ENCODE measurements at regions of chr1 and their contacts with region 1.

Region 1: GRCh38 chr1:24391882-24392603 is 21.5 kb downstream of the STPG1 start:
- DNase-seq: peak in 1 of 2 donors; percentile 71
- H3K4me3 ChIP-seq: no peak overlapping the region
- H3K27ac ChIP-seq: peak overlapping the region; percentile 51 to 75
- H3K4me1 ChIP-seq: peaks cover 0 to 2% of the 10 kb centered on the region in 2 donors
- H3K27me3 ChIP-seq: no peaks in the 10 kb centered on the region
- CTCF ChIP-seq: peak; percentile 44 to 57 (median 48)

Region 2: GRCh38 chr1:24070821-24071393 is 321.1 kb before region 1 on chr1:
- intact Hi-C with region 1: loop called (anchors 5 kb)
- DNase-seq: peak in 1 of 2 donors; percentile 87
- H3K4me3 ChIP-seq: no peak overlapping the region
- H3K27ac ChIP-seq: no peak overlapping the region
- H3K4me1 ChIP-seq: no peaks in the 10 kb centered on the region
- H3K27me3 ChIP-seq: no peaks in the 10 kb centered on the region
- CTCF ChIP-seq: peak; percentile 80 to 95 (median 85)

Region 3: DNA sequence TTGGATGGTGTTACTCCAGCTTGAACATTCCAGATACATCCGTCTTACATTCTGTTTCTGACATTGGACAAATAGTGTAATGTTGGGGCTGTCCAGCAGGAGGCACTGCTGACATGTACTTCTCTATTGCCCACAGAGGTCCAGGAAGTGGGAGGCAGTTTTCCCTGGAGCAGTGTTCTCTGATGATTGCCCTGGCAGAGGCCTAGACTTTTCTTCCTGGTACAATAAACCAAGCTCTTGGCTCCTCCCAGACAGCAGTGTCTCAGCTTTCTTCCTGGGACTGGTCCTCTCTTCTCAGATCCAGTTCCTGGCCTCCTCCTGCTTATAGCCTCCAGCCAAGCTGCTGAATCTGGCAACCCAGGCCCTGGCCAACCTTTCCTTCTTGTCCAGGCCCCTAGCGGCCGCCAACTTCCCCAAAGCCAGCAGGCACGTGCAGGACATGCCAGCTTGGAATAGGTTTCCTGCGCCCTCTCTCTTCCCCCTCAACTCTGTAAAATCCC is 190.1 kb before region 1 on chr1:
- intact Hi-C with region 1: loop called (anchors 1 kb)
- DNase-seq: peak; percentile 39 to 90
- H3K4me3 ChIP-seq: no peak overlapping the region
- H3K27ac ChIP-seq: no peak overlapping the region
- H3K4me1 ChIP-seq: no peaks in the 10 kb centered on the region
- H3K27me3 ChIP-seq: no peaks in the 10 kb centered on the region
- CTCF ChIP-seq: peak; percentile 36 to 65 (median 61)

Region 4: GRCh38 chr1:24502709-24503058 is 110.6 kb after region 1 on chr1 and contains the start of gene RCAN3:
- intact Hi-C with region 1: no loop called
- DNase-seq: peak; percentile 26 to 75
- H3K4me3 ChIP-seq: peak within 1 kb of the TSS; percentile 69 to 87
- H3K27ac ChIP-seq: peak within 1 kb of the TSS in 1 of 2 donors; percentile 52
- H3K4me1 ChIP-seq: peaks cover 0 to 3% of the 10 kb centered on the region in 2 donors
- H3K27me3 ChIP-seq: no peaks in the 10 kb centered on the region
- CTCF ChIP-seq: no peak
- total RNA-seq, gene RCAN3: 2.0 TPM

Region 5: DNA sequence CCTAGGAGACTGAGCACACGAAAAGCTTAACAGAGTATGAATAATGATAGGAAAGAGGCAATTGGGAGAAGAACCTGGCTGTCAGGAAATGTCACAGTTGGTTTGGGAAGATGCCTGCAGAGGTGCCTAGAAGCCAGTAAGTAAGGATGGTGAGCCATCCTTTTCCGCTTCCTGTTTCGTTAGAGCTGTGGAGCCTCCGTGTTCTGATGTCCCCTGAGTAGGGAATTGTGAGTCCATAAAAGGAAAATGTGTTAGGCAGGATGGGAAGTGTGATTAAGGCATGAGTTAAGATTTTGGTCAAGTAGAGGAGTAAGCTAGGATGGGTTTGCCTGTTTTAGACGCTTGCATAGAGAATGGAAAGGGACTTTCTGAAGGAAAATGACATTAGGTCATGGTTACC is 362.2 kb after region 1 on chr1:
- intact Hi-C with region 1: no loop called
- DNase-seq: no peak
- H3K4me3 ChIP-seq: peak overlapping the region in 1 of 2 donors; percentile 27
- H3K27ac ChIP-seq: peak overlapping the region; percentile 70 to 97
- H3K4me1 ChIP-seq: peaks cover 6 to 50% of the 10 kb centered on the region in 2 donors
- H3K27me3 ChIP-seq: no peaks in the 10 kb centered on the region
- CTCF ChIP-seq: no peak